ENCODE measurements at regions of chr10 and their contacts with region 1.

Region 1: DNA sequence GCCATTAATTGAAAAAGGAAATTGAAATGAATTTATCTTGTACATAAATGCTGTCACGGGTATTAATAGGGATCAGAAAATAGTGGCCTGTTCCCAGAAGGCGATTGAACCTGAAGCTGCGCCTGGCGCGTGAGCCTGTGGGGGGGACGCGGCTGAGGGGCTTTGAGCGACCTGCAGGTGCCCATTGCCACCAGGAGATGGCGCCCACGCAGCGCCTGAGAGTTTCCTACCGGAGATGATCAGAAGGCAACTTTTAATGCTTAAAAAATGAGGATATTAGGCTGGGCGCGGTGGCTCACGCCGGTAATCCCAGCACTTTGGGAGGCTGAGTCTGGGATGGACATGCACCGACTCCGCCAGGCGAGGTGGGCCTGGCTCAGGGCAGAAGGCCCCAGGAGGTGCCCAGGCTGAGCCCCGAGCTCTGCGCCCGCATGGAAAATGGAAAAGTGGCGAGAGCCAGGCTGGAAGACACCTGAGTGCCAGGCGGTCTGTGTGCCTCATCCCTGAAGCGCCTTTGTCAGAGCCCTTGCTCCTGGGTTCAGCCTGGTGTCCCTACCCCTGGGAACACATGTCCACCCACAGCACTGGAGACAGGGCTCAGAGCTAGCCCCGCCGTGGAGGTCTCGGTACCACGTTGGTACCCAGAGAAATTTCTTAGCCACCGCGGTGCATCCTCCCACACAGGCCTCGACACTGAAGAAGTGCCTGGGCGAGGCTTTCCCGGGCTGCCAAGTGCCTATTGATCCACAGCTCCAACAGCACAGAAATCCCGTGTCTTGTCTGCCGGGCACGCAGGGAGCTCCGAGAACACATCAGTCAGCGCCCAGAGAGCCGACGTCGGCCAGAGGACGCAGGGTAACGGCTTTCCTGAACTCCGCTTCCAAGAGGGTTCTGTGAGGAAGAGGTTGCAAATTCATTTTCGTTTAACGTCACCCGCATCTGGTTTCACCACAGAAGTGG is 117.4 kb downstream of the INPP5A start:
- DNase-seq: peak; percentile 59 to 73
- ATAC-seq: peak; percentile 74 to 90 (median 78)
- H3K4me3 ChIP-seq: no peak overlapping the region
- H3K4me3 Mint-ChIP-seq: no peak overlapping the region
- H3K27ac ChIP-seq: no peak overlapping the region
- H3K27ac Mint-ChIP-seq: no peak overlapping the region
- H3K4me1 ChIP-seq: no peaks in the 10 kb centered on the region
- H3K4me1 Mint-ChIP-seq: peaks cover 0 to 10% of the 10 kb centered on the region in 2 donors
- H3K27me3 ChIP-seq: no peaks in the 10 kb centered on the region
- H3K27me3 Mint-ChIP-seq: no peaks in the 10 kb centered on the region
- CTCF ChIP-seq: peak; percentile 93

Region 2: DNA sequence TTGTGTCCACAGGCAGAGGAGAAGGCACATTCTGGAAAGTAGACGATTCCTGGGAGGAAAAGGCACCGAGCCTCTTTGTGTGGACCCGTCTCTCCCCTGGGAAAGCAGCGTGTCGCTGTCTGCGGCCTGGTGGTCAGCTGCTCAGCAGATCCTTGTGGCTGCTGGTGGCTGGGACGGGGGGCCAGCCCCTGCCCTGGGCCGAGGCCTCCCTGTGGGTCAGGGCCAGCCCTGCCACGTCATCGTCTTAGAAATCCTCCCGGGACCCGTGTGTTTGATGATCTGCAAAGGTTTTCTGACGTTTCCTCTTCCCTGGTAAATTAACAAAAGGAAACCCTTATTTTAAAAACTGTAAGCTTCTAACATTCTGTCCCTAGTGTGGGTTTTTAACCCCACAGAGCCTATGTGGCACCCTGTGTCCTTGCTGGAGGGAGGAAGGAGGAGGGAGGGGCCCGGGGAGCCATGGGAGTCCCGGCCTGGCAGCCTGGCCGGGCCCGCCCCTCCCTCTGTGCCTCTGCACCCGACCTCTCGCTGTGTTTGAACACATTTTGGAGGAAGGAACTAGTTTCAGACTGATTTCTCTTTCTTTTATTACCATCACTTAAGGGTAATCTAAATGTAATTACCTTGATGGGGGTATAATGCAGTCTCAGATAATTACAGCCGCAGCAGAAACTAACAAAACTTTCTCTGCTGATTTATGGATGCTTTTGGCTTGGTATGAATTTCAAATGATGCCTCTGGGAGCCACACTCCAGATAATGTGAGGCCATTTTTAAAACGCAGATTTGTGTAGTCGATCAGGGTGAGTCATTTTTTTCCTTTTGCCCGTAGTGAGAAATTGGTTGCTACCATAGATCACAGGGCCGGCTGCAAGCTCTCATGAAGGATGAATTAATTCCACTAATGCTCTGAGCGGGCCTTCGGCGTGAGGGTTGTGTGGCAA is 45.4 kb after region 1 on chr10:
- intact Hi-C with region 1: no loop called
- DNase-seq: no peak
- ATAC-seq: no peak
- H3K4me3 ChIP-seq: no peak overlapping the region
- H3K4me3 Mint-ChIP-seq: peak overlapping the region; percentile 17
- H3K27ac ChIP-seq: no peak overlapping the region
- H3K27ac Mint-ChIP-seq: no peak overlapping the region
- H3K4me1 ChIP-seq: peaks cover 39% of the 10 kb centered on the region
- H3K4me1 Mint-ChIP-seq: peaks cover 40 to 48% of the 10 kb centered on the region in 2 donors
- H3K27me3 ChIP-seq: no peaks in the 10 kb centered on the region
- H3K27me3 Mint-ChIP-seq: no peaks in the 10 kb centered on the region
- CTCF ChIP-seq: no peak

Region 3: GRCh38 chr10:132793871-132794849 is 139.2 kb after region 1 on chr10:
- intact Hi-C with region 1: loop called (anchors 5 kb)
- DNase-seq: no peak
- ATAC-seq: no peak
- H3K4me3 ChIP-seq: no peak overlapping the region
- H3K4me3 Mint-ChIP-seq: no peak overlapping the region
- H3K27ac ChIP-seq: no peak overlapping the region
- H3K27ac Mint-ChIP-seq: no peak overlapping the region
- H3K4me1 ChIP-seq: no peaks in the 10 kb centered on the region
- H3K4me1 Mint-ChIP-seq: no peaks in the 10 kb centered on the region
- H3K27me3 ChIP-seq: peaks cover 2% of the 10 kb centered on the region
- H3K27me3 Mint-ChIP-seq: peaks cover 0 to 11% of the 10 kb centered on the region in 2 donors
- CTCF ChIP-seq: no peak

Region 4: DNA sequence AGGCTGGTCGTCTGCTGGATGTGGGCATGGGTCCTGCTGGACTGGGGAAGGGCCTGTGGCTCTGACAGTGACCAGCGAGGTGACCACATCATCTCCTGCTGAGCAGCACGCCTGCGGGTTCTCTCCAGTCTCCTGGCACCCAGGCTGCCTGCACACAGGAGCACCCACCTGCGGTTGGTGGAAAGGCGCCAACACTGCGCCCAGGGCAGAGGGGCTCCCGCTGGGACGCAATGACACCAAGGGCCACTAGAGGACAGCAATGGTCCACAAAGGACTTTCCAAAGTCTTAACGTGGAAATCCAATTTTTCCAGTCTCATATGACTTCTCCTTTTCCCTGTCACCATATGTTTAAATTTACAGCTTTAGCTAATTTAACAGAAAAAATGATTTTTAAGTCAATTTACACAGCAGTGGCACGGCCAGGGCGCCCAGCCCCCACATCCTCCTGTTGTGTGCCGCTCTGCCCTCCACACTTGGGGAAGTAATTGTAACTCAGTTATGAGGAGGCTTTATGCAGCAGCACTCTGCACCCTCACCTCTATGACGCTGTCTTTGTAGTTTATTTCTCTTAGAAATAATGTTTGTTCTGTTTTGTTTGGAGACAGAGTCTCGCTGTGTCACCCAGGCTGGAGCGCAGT is 249.3 kb after region 1 on chr10:
- intact Hi-C with region 1: loop called (anchors 10 kb)
- DNase-seq: peak in 1 of 2 donors; percentile 26
- ATAC-seq: peak in 2 of 3 donors; percentile 55 to 70
- H3K4me3 ChIP-seq: no peak overlapping the region
- H3K4me3 Mint-ChIP-seq: no peak overlapping the region
- H3K27ac ChIP-seq: no peak overlapping the region
- H3K27ac Mint-ChIP-seq: no peak overlapping the region
- H3K4me1 ChIP-seq: no peaks in the 10 kb centered on the region
- H3K4me1 Mint-ChIP-seq: peaks cover 8 to 9% of the 10 kb centered on the region in 2 donors
- H3K27me3 ChIP-seq: no peaks in the 10 kb centered on the region
- H3K27me3 Mint-ChIP-seq: peaks cover 10 to 22% of the 10 kb centered on the region in 2 donors
- CTCF ChIP-seq: peak; percentile 78